Colonic mucosa (tissue), 4 donors: ENCODE measurements at regions of chr6 and their contacts with region 1.

Region 1: DNA sequence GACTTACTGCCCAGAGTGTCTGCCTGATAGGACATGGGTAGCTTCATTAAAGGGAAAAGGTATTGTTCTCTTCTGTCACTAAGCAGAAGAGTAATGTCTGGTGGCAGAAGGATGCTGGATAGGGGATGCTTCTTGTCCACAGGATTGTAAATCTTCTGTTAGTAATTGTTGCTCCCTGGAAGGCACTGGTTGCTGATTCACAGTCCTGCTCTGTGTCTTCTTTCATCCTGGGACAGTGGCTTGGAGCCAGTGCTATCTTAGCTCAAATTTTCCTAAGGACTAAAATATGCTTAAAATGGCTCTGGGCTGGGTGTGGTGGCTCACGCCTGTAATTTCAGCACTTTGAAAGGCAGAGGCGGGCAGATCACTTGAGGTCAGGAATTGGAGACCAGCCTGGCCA is 48.0 kb downstream of the SYTL3 start:
- DNase-seq: no peak
- H3K4me3 ChIP-seq: no peak overlapping the region
- H3K27ac ChIP-seq: no peak overlapping the region
- H3K4me1 ChIP-seq: no peaks in the 10 kb centered on the region
- H3K27me3 ChIP-seq: no peaks in the 10 kb centered on the region
- CTCF ChIP-seq: no peak

Region 2: GRCh38 chr6:158660333-158660754 is 37.5 kb before region 1 on chr6:
- intact Hi-C with region 1: loop called (anchors 5 kb)
- DNase-seq: peak; percentile 63
- H3K4me3 ChIP-seq: no peak overlapping the region
- H3K27ac ChIP-seq: no peak overlapping the region
- H3K4me1 ChIP-seq: no peaks in the 10 kb centered on the region
- H3K27me3 ChIP-seq: no peaks in the 10 kb centered on the region
- CTCF ChIP-seq: peak; percentile 57

Region 3: DNA sequence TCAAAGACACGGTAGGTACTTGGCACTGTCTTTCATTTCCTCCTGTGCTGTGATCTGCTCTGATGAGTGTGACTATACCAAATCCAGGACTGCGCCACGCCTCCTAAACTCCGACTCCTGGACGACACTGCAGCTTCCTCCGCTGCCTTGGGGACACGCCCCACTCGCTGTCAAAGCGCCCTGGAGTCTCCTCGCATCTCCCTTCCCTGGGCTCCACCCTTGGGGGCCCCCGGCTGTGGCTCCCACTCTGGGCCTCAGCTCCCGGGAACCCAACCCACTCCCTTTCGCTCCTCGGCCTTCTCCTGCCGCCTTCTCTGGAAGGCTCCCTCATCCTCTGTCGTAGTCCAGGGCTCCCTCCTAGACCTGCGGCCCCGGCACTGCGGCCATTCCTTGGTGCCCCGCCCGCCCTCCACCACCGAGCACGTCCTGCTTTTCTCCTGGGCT is 241.0 kb after region 1 on chr6:
- intact Hi-C with region 1: no loop called
- DNase-seq: peak; percentile 82
- H3K4me3 ChIP-seq: peak overlapping the region; percentile 34
- H3K27ac ChIP-seq: no peak overlapping the region
- H3K4me1 ChIP-seq: no peaks in the 10 kb centered on the region
- H3K27me3 ChIP-seq: no peaks in the 10 kb centered on the region
- CTCF ChIP-seq: no peak